Calu3 (cell line): ENCODE measurements at regions of chr5 and their contacts with region 1.

Region 1: DNA sequence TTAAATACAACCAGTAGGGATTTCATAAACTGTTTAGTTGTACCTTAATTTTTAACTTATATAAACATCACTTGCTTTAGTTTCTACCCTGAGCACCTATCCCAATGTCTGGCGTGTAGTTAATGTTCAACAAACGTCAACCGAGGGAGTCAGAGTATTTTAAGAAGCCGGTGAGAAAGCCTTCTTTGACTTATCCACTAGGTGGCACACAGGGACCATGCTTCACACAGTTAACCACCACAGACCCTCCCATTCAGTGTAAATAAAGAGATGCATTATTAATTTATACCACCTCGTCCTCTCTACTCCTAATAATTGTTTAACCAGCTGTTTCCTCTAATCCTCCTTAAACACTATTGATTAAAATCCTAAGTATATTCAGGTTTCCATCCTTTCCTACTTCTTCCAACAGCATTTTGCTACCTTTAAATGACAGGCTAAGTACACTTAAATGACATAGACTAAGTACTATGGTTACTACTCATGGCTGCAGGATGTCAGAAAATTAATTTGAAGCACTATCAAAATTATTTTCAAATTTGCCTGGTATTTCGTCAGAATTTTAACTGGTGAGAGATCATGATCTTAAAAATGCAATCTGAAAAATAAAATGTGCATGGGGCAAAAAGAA is 2.3 kb downstream of the HAPLN1 start:
- DNase-seq: peak; percentile 69
- H3K4me3 Mint-ChIP-seq: no peak overlapping the region
- H3K27ac Mint-ChIP-seq: no peak overlapping the region
- H3K4me1 Mint-ChIP-seq: peaks cover 25% of the 10 kb centered on the region
- H3K27me3 Mint-ChIP-seq: peaks cover 13% of the 10 kb centered on the region
- CTCF ChIP-seq: peak; percentile 91

Region 2: GRCh38 chr5:83777856-83778255 is 59.5 kb after region 1 on chr5:
- CTCF ChIA-PET with region 1: no interaction called
- intact Hi-C with region 1: loop called (anchors 2 kb)
- DNase-seq: no peak
- H3K4me3 Mint-ChIP-seq: no peak overlapping the region
- H3K27ac Mint-ChIP-seq: peak overlapping the region; percentile 75
- H3K4me1 Mint-ChIP-seq: peaks cover 50% of the 10 kb centered on the region
- H3K27me3 Mint-ChIP-seq: no peaks in the 10 kb centered on the region
- CTCF ChIP-seq: no peak

Region 3: DNA sequence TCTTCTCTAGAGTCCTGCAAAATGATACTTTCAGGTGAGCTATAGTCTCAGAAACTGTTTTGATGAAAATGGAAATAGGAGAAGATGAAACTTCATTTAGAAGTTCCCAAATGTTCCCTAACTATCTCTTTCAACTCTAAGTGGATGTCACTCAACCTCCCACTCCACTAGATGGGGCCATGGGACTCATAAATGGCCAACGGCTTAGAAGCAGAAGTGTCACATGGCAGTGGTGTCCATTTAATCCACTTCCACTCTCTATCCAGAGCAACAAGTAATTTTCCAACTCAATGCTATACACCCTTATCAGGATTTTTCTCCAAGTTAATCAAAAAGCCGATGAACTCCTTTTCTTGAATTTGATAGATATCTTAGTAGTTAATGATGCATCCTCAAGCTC is 370.7 kb after region 1 on chr5:
- CTCF ChIA-PET with region 1: no interaction called
- intact Hi-C with region 1: loop called (anchors 5 kb)
- DNase-seq: peak; percentile 49
- H3K4me3 Mint-ChIP-seq: no peak overlapping the region
- H3K27ac Mint-ChIP-seq: no peak overlapping the region
- H3K4me1 Mint-ChIP-seq: no peaks in the 10 kb centered on the region
- H3K27me3 Mint-ChIP-seq: no peaks in the 10 kb centered on the region
- CTCF ChIP-seq: peak; percentile 27

Region 4: DNA sequence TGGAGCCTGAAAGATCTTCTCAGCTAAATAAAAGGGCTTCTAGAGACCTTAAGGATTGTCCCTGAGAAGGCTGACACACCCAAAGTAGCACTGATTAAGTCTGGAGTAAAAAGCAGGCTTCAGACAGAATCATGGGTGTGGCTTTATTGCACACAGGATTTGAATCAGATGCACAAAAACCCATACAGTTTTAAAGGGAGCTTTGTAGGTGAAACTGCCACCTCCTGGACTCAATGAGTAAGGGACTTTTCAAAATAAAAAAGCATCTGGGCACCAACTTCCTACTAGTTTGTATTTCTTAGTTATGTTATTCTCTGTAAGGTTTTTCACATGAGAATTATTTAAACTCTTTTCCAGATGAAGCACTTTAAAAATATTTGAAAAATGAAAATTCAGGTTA is 537.0 kb after region 1 on chr5:
- CTCF ChIA-PET with region 1: interaction called, 3 read pairs
- intact Hi-C with region 1: loop called (anchors 1 kb)
- DNase-seq: peak; percentile 4
- H3K4me3 Mint-ChIP-seq: no peak overlapping the region
- H3K27ac Mint-ChIP-seq: no peak overlapping the region
- H3K4me1 Mint-ChIP-seq: no peaks in the 10 kb centered on the region
- H3K27me3 Mint-ChIP-seq: no peaks in the 10 kb centered on the region
- CTCF ChIP-seq: no peak

Region 5: GRCh38 chr5:84450617-84451414 is 732.5 kb after region 1 on chr5:
- CTCF ChIA-PET with region 1: no interaction called
- intact Hi-C with region 1: loop called (anchors 5 kb)
- DNase-seq: no peak
- H3K4me3 Mint-ChIP-seq: no peak overlapping the region
- H3K27ac Mint-ChIP-seq: no peak overlapping the region
- H3K4me1 Mint-ChIP-seq: no peaks in the 10 kb centered on the region
- H3K27me3 Mint-ChIP-seq: no peaks in the 10 kb centered on the region
- CTCF ChIP-seq: no peak

Region 6: DNA sequence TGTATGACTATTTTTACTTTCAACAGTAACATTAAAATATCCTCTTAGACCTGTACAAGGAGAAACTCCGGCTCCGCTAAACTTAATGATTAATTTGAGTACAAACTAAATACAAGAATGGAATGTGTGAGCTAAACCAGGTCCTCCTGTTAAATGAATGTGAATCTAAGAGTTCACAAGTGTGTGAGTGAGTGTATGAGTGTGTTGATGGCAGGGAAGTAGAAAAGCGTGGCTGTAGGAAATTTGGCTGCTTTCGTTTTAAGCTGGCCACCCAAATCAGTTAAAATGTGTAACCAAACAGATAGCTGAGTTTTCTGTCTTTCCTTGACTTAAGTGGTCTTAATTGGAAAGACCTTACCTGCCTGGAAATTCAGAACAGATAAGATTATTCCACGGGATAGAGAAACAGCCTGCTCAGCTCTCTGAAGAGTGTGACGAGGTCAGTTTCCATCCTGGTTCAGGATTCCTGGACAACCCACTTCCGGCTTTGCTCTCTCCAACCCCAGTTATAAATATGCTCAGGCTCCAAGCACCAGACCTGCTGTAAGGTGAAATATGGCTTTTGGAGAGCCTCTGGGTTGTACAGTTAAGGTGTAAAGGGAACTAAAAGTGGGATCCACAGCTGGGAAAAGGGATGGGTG is 1575.0 kb after region 1 on chr5:
- CTCF ChIA-PET with region 1: no interaction called
- intact Hi-C with region 1: loop called (anchors 10 kb)
- DNase-seq: peak; percentile 39
- H3K4me3 Mint-ChIP-seq: peak overlapping the region; percentile 67
- H3K27ac Mint-ChIP-seq: peak overlapping the region; percentile 77
- H3K4me1 Mint-ChIP-seq: no peaks in the 10 kb centered on the region
- H3K27me3 Mint-ChIP-seq: no peaks in the 10 kb centered on the region
- CTCF ChIP-seq: no peak